SK-N-SH (cell line): ENCODE measurements at regions of chr11 and their contacts with region 1.

Region 1: GRCh38 chr11:43987384-43988039 is 45.1 kb downstream of the C11orf96 start:
- DNase-seq: peak; percentile 88
- H3K4me3 ChIP-seq: peak overlapping the region in 1 of 2 experiments; percentile 15; a peak in 1 of 4 replicates
- H3K27ac ChIP-seq: peak overlapping the region; percentile 79 to 96
- H3K4me1 ChIP-seq: peaks cover 12 to 59% of the 10 kb centered on the region in 2 experiments; a peak in 3 of 4 replicates
- H3K27me3 ChIP-seq: peaks cover 8% of the 10 kb centered on the region; the same call in 1 of the 2 replicates
- CTCF ChIP-seq: no peak
- EP300 ChIP-seq: peak; percentile 45 to 80; a peak in 3 of 4 replicates
- RAD21 ChIP-seq: peak; percentile 41

Region 2: DNA sequence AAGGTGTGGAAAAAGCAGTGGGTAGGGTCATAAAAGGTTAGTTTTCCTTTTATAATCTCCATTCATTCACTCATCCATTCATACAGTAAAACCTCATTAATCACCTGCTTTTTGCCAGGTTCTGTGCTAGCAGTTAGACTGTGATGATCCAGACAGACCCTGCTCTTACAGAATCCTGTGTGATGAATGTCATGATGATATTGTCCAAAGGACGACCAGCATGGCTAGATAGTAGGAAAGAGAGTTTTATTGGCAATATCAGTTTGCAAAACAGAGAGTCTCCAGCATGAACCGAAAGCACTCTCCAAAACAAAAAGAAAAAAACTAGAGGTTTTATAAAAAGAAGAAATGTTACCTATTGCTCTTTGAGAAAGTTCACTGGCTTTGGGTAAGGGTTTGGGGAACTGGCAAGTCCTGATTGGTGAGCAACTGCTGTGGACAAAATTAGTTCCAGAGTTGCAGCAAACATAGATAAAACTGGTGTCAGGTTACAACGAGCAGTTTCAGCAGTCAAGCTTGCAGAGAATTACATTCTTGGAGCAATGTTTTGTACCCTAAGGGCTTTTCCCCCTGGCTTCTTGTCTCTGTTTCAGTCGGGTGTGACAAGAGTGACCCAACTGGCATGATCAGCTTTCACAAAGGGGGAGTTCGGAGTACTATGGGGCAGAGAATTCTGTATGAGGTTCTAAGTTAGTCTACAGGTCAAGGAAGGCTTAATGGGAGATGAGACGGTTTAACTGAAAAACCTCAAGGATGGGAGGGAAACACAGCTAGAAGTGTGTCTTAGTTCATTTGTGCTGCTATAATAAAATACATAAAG is 248.7 kb before region 1 on chr11:
- CTCF ChIA-PET with region 1: no interaction called
- POLR2A ChIA-PET with region 1: no interaction called
- DNase-seq: no peak
- H3K4me3 ChIP-seq: no peak overlapping the region
- H3K27ac ChIP-seq: no peak overlapping the region
- H3K4me1 ChIP-seq: peaks cover 9 to 41% of the 10 kb centered on the region in 2 experiments; a peak in 3 of 4 replicates
- H3K27me3 ChIP-seq: no peaks in the 10 kb centered on the region
- CTCF ChIP-seq: no peak
- EP300 ChIP-seq: no peak
- RAD21 ChIP-seq: no peak

Region 3: DNA sequence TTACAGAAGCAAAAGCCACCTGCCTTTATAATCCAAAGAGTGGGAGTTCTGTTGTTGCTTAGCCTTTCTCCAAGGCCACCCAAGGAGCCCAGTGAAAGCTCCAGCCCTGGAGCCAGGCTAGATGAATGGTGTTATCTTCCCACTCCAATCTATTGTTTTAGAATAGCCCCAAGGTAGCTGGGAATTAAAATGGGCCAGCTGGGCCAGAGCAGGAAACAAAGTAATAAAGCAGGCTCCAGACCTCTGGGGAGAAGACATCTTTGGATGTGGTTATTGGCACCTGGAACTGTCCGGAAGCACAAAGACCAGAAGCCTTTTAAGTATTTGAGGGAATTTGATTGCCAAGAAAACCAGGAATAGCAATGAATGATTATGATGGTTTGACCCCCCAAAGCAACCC is 36.3 kb before region 1 on chr11:
- CTCF ChIA-PET with region 1: interaction called, 25 read pairs
- POLR2A ChIA-PET with region 1: interaction called, 53 read pairs
- DNase-seq: no peak
- H3K4me3 ChIP-seq: no peak overlapping the region
- H3K27ac ChIP-seq: peak overlapping the region in 1 of 2 experiments; percentile 83; a peak in 2 of 4 replicates
- H3K4me1 ChIP-seq: peaks cover 0 to 43% of the 10 kb centered on the region in 2 experiments; a peak in 1 of 4 replicates
- H3K27me3 ChIP-seq: peaks cover 19% of the 10 kb centered on the region; the same call in 1 of the 2 replicates
- CTCF ChIP-seq: no peak
- EP300 ChIP-seq: peak in 1 of 2 experiments; percentile 85; a peak in 2 of 4 replicates
- RAD21 ChIP-seq: no peak

Region 4: GRCh38 chr11:43962383-43963278 is 24.9 kb before region 1 on chr11:
- CTCF ChIA-PET with region 1: interaction called, 11 read pairs
- POLR2A ChIA-PET with region 1: interaction called, 5 read pairs
- DNase-seq: peak; percentile 60
- H3K4me3 ChIP-seq: peak overlapping the region in 1 of 2 experiments; percentile 9; a peak in 2 of 4 replicates
- H3K27ac ChIP-seq: peak overlapping the region in 1 of 2 experiments; percentile 90; a peak in 2 of 4 replicates
- H3K4me1 ChIP-seq: peaks cover 0 to 28% of the 10 kb centered on the region in 2 experiments; a peak in 3 of 4 replicates
- H3K27me3 ChIP-seq: no peaks in the 10 kb centered on the region
- CTCF ChIP-seq: no peak
- EP300 ChIP-seq: peak in 1 of 2 experiments; percentile 87; a peak in 2 of 4 replicates
- RAD21 ChIP-seq: 0 out of 2 replicates have a peak, but pooled peaks have one; percentile 16